ENCODE measurements at regions of chr7 and their contacts with region 1.

Region 1: DNA sequence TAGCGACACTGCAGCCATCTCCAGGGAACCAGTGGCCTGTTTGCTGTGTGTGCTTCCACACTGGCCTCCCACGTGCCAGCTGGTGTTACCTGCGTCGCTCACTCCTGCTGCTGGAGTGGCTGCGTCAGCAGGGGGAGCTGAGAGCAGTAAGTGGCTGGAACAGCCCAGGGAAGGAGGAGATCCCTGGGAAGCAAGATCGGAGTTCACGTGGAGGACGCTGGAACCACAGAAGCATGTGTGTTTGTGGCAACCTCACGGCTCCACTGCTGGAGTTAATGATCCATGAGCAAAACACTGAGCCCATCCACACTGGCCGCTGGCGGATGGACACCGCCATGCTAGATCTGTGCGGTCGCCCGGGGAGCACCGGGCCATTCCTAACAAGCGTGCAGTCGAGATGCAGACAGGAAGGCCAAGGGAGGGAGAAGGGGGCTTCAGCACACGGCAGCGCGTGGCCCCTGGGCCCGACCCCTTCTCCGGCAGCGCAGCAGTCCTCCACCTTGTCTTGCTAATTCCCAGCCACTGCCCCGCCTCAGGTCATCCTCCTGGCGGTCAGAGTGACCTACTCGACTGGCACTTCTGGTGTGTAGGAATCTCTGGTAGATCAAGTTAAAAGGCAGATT is 68.5 kb upstream of the EEPD1 start:
- DNase-seq: peak; percentile 32 to 35
- ATAC-seq: peak in 7 of 8 donors; percentile 42 to 88 (median 67)
- H3K4me3 ChIP-seq: no peak overlapping the region
- H3K27ac ChIP-seq: no peak overlapping the region
- H3K4me1 ChIP-seq: peaks cover 0 to 23% (median 10%) of the 10 kb centered on the region in 9 donors
- H3K27me3 ChIP-seq: no peaks in the 10 kb centered on the region
- CTCF ChIP-seq: peak in 8 of 9 donors; percentile 17 to 47 (median 30)

Region 2: GRCh38 chr7:36066343-36066664 is 18.3 kb before region 1 on chr7:
- intact Hi-C with region 1: loop called in 1 of 10 experiments (anchors 2 kb)
- DNase-seq: no peak
- ATAC-seq: no peak
- H3K4me3 ChIP-seq: no peak overlapping the region
- H3K27ac ChIP-seq: no peak overlapping the region
- H3K4me1 ChIP-seq: peaks cover 0 to 19% (median 0%) of the 10 kb centered on the region in 9 donors
- H3K27me3 ChIP-seq: no peaks in the 10 kb centered on the region
- CTCF ChIP-seq: no peak

Measured in heart right ventricle (tissue), 16 donors.